Activated T-helper 1 cell treated with anti-CD3 and anti-CD28 coated beads, Interleukin-12 subunit alpha, Interleukin-12 subunit beta, Interleukin-2, Interleukin-4 antibody, amounts not matched to agents 30 ng/mL and 10 ng/mL and 1 ng/mL, durations not matched to agents 14 hours and 24 hours and 36 hours (primary cell): ENCODE measurements at regions of chr16 and their contacts with region 1.

Region 1: DNA sequence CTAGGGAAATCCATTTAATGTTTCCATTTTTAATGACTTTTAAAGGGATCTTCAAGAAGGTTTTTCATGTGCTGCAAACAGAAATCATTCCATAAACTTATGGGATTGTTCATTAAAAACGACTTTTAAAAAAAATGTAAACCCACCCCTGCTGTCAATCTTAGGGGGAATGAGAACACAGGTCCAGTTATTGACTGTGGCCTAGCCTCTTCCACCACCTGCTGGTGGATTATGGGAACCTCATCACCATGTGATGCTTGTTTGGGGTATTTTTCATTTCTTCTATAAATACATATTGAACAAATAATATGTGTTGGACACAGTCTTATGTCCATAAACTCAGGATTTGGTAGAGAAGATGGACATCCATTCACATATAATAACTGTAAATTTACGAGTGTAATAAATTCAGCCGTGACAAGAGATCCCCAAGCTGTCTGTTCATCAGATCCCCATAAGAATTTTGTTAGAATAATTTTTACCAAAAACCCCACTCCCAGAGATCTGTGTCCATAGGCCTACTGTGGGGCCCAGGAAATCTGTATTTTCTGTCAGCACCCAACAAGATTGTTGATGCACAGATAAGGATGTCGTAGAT is 42.0 kb upstream of the TMC5 start:
- DNase-seq: no peak
- H3K4me3 Mint-ChIP-seq: no peak overlapping the region
- H3K27ac Mint-ChIP-seq: no peak overlapping the region
- H3K4me1 Mint-ChIP-seq: peaks cover 9% of the 10 kb centered on the region
- H3K27me3 Mint-ChIP-seq: peaks cover 3% of the 10 kb centered on the region

Region 2: GRCh38 chr16:19086322-19087199 is 289.1 kb before region 1 on chr16:
- intact Hi-C with region 1: loop called (anchors 1 kb)
- DNase-seq: peak; percentile 75
- H3K4me3 Mint-ChIP-seq: peak overlapping the region; percentile 54
- H3K27ac Mint-ChIP-seq: no peak overlapping the region
- H3K4me1 Mint-ChIP-seq: no peaks in the 10 kb centered on the region
- H3K27me3 Mint-ChIP-seq: peaks cover 7% of the 10 kb centered on the region

Region 3: DNA sequence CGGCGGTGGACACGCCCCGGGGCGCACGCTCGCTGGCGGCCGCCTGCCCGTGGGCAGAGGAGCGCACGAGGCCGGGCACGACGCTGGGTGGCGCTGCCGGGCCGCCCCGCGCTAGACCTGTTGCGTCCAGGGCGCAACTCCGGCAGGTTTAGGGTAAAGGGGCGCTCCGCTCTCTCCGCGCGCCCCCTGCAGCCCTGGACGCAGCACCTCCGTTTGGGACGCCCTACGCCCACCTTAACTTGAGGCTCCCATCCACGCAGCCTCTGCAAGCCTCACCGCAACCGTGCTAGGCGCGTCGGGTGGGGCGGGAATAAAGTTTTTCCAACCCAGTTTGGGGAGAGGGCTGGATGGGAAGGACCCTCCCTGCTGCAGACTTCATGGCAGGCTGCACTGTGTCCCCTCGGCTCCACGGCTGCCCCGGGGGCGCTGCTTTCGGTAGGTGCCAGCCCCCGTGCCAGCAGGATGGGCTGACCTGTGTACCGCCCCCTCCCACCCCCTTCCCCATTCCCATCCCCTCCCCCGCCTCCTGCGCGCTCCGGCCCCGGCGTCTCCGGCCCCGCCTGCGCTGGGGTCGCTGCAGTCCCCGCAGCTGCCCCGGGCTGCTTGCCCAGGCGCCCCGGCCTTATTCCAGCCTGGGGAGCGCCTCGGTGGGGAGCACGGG is 207.8 kb before region 1 on chr16 and contains the start of gene SYT17:
- intact Hi-C with region 1: loop called (anchors 1 kb)
- DNase-seq: peak; percentile 14
- H3K4me3 Mint-ChIP-seq: no peak within 1 kb of the TSS
- H3K27ac Mint-ChIP-seq: no peak within 1 kb of the TSS
- H3K4me1 Mint-ChIP-seq: no peaks in the 10 kb centered on the region
- H3K27me3 Mint-ChIP-seq: peaks cover 39% of the 10 kb centered on the region
- total RNA-seq, gene SYT17: 0.37 and 0.54 TPM in 2 replicates

Region 4: DNA sequence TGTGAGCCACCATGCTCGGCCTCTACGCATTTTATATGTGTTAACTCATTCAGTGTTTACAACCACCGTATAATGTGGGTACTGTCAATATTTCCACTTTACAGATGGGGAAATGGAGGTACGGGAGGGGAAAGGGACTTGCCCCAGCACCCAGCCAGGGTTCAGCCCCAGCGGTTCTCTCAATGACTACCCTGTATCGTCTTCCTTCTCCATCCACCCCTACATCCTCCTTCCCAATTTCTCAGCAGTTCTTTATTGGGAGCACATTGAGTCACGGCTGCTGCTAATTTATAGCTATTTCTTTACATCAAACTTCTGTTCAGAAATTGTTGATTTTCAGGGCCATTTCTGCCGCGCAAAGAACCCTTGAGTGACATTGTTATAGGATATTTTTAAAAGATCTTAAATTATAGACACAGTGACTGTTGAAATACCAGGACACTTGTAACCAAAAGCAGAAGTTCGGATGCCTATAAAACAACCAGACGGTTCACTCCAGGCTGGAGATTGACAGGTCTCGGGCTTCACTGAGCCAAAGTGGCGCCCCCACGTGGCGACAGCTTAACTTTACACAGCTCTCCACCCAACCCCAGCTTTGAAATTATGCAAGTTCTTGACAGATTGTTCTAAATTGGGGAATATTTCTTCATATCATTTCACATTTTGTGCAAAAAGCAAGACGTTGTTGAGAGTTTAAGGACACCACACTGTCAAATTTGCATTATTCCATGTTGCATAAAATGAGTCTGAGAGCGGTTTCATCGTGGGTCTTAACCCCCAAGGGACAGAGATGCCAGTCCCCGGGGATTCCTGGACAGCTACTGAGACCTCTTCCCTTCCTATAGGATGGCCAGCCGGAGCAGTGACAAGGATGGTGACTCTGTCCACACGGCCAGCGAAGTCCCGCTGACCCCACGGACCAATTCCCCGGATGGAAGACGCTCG is 195.8 kb before region 1 on chr16:
- intact Hi-C with region 1: loop called (anchors 5 kb)
- DNase-seq: peak; percentile 24
- H3K4me3 Mint-ChIP-seq: no peak overlapping the region
- H3K27ac Mint-ChIP-seq: peak overlapping the region; percentile 52
- H3K4me1 Mint-ChIP-seq: no peaks in the 10 kb centered on the region
- H3K27me3 Mint-ChIP-seq: peaks cover 3% of the 10 kb centered on the region

Region 5: GRCh38 chr16:19213890-19214289 is 161.8 kb before region 1 on chr16:
- intact Hi-C with region 1: loop called (anchors 1 kb)
- DNase-seq: no peak
- H3K4me3 Mint-ChIP-seq: no peak overlapping the region
- H3K27ac Mint-ChIP-seq: no peak overlapping the region
- H3K4me1 Mint-ChIP-seq: no peaks in the 10 kb centered on the region
- H3K27me3 Mint-ChIP-seq: no peaks in the 10 kb centered on the region

Region 6: DNA sequence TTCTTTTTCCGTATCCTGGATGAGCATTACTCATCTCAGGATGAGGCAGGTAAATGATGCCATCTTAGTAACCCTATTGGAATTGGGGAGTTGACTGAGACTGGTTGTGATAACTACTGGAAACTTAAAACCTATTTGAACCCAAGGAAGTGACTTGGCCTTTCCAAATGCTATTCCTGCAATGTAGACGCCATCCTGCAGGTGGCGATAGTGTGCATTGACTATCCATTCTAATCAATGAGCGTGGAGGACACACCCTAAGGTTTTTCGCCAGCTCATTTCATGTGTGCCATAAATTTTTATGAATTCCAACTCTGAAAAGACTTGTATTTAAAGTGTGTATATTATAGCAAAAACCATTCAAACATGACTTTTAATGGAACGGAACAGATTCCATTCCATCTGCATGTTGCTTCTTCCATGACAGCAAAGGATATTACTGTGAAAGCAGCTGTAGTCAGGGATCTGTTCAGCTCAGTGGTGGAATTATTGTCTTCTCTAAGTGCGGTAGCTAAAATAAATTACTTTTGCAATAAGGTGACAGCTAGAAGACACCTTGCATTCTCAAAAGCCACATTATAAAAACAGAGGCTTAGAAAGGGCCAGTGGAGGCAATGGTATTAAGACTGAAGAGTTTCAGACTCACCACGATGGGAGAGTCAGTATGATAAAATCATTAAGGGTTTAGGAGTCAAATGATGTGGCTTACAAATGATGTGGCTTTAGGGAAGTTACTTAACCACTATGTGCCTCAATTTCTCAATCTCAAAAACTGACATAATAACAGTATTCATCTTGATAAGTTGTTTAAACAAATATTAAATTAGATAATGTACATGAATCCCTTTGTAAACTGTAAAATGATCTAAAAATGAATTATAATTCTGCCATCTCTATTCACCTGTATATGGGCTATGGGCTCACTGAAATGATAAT is 152.2 kb before region 1 on chr16:
- intact Hi-C with region 1: loop called (anchors 1 kb)
- DNase-seq: no peak
- H3K4me3 Mint-ChIP-seq: no peak overlapping the region
- H3K27ac Mint-ChIP-seq: no peak overlapping the region
- H3K4me1 Mint-ChIP-seq: no peaks in the 10 kb centered on the region
- H3K27me3 Mint-ChIP-seq: no peaks in the 10 kb centered on the region